PC-3 (cell line): ENCODE measurements at regions of chr3 and their contacts with region 1.

Region 1: GRCh38 chr3:57100046-57100695 is 39.7 kb downstream of the SPATA12 start:
- DNase-seq: peak; percentile 91
- ATAC-seq: peak; percentile 76
- H3K4me3 ChIP-seq: no peak overlapping the region
- H3K27ac ChIP-seq: no peak overlapping the region
- H3K4me1 ChIP-seq: peaks cover 20% of the 10 kb centered on the region
- H3K27me3 ChIP-seq: no peaks in the 10 kb centered on the region
- CTCF ChIP-seq: peak; percentile 92

Region 2: DNA sequence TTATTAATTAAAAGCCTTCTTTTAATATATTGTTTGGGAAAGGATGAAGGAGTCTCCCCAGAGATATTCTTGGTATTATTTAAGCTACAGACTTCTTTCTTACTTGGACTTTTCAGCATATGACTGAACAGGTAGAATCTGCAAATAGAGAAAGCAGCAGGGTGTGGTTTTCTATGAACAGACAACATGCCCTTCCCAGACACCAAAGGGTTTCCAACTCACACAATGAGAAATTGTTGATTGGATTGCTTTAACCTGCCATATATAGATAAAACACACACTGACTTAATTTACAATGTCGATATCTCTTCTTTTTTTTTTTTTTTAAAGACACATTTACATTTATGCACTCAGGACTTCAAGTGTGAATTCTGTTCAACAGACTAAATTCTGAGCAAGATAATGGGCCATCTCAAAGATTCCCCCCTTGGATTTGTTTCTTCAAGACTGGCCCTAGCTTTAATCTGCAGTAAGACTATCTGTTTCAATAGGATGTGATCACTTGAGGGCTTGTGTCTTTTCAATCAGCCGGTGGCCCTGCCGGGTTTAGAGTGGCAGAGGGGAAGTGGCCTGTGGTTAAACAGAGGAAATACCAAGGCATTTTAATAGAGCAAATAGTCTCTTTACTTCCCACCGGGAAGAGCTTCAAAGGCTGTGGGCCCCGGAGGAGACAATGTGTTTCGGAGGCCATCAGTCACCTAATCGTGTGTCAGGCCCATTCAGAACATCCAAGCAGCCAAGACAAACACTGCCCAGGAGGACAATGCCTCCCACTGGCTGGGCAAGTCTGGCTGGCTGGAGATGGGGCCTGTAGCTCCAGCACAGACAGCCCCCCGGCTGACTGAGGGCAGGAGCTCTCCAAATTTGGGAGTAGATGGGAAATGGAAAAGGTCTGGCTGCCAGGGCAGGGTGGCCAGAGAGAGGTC is 58.9 kb after region 1 on chr3:
- CTCF ChIA-PET with region 1: interaction called, 5 read pairs
- POLR2A ChIA-PET with region 1: no interaction called
- intact Hi-C with region 1: loop called (anchors 1 kb)
- DNase-seq: peak; percentile 91
- ATAC-seq: peak; percentile 89
- H3K4me3 ChIP-seq: peak overlapping the region; percentile 5; the same call in 1 of the 2 replicates
- H3K27ac ChIP-seq: no peak overlapping the region
- H3K4me1 ChIP-seq: peaks cover 23% of the 10 kb centered on the region
- H3K27me3 ChIP-seq: no peaks in the 10 kb centered on the region
- CTCF ChIP-seq: peak; percentile 20; the same call in 1 of the 2 replicates

Region 3: DNA sequence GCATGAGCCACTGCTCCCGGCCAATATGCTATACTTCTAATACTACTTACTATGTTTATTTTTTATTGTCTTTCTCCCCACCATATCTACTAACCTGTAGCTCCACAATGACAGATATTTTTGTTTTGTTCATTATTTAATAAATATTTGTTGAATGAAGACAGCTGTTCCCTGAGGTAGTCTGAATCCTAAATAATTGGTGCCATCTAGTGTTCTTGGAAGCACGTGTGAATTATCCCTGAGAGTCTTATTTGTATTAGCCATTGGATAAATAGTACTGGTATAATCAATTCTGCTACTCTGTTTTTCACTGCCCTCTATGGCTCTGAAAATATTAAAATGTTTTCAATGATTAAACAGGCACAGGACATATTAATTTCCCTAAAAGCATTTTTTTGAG is 121.7 kb after region 1 on chr3:
- CTCF ChIA-PET with region 1: no interaction called
- POLR2A ChIA-PET with region 1: no interaction called
- intact Hi-C with region 1: loop called (anchors 1 kb)
- DNase-seq: peak; percentile 62
- ATAC-seq: peak; percentile 82
- H3K4me3 ChIP-seq: no peak overlapping the region
- H3K27ac ChIP-seq: no peak overlapping the region
- H3K4me1 ChIP-seq: peaks cover 10% of the 10 kb centered on the region
- H3K27me3 ChIP-seq: no peaks in the 10 kb centered on the region
- CTCF ChIP-seq: peak; percentile 72

Region 4: DNA sequence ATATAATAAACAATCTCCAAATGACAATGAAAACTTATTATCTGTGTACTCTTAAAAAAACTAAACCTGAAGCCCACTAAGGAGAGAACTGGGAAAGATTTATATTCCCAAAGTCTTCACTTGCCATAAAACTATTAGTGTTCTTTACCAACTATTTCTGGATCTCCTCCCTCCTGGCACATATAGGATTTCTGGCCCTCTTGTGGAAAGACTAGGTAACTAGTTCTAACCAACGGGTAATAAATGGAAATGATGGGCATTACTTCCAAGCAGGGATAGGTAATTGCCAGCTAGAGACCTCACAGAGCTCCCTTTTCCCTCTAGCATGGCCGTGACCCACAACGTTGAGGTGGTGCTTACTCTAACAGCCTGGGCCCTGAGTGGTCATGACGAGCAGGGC is 333.9 kb after region 1 on chr3:
- CTCF ChIA-PET with region 1: no interaction called
- POLR2A ChIA-PET with region 1: no interaction called
- intact Hi-C with region 1: loop called (anchors 5 kb)
- DNase-seq: peak; percentile 84
- ATAC-seq: peak; percentile 92
- H3K4me3 ChIP-seq: no peak overlapping the region
- H3K27ac ChIP-seq: no peak overlapping the region
- H3K4me1 ChIP-seq: no peaks in the 10 kb centered on the region
- H3K27me3 ChIP-seq: no peaks in the 10 kb centered on the region
- CTCF ChIP-seq: peak; percentile 80